Naive thymus-derived CD4-positive, alpha-beta T cell (primary cell): ENCODE measurements at regions of chr19 and their contacts with region 1.

Region 1: GRCh38 chr19:58278157-58279041 is at the start of gene ZNF8:
- DNase-seq: peak; percentile 84 to 96 (median 93)
- ATAC-seq: peak; percentile 99
- H3K4me3 ChIP-seq: peak within 1 kb of the TSS; percentile 93
- H3K4me3 Mint-ChIP-seq: peak within 1 kb of the TSS; percentile 89 to 99 (median 95)
- H3K27ac ChIP-seq: peak within 1 kb of the TSS; percentile 80
- H3K27ac Mint-ChIP-seq: peak within 1 kb of the TSS; percentile 88 to 97 (median 96)
- H3K4me1 ChIP-seq: peaks cover 12 to 15% of the 10 kb centered on the region in 2 donors
- H3K4me1 Mint-ChIP-seq: peaks cover 28 to 63% (median 43%) of the 10 kb centered on the region in 7 donors
- H3K27me3 ChIP-seq: no peaks in the 10 kb centered on the region
- H3K27me3 Mint-ChIP-seq: no peaks in the 10 kb centered on the region
- total RNA-seq, gene ZNF8: 5.2 to 10.5 (median 10.0) TPM

Region 2: GRCh38 chr19:57746580-57747471 is 531.6 kb before region 1 on chr19 and contains the start of gene ZNF776:
- CTCF ChIA-PET with region 1: no interaction called
- POLR2A ChIA-PET with region 1: no interaction called
- intact Hi-C with region 1: loop called in 1 of 2 experiments (anchors 2 kb)
- DNase-seq: peak; percentile 40 to 90 (median 84)
- ATAC-seq: peak; percentile 99
- H3K4me3 ChIP-seq: peak within 1 kb of the TSS; percentile 86
- H3K4me3 Mint-ChIP-seq: peak within 1 kb of the TSS; percentile 91 to 99 (median 94)
- H3K27ac ChIP-seq: peak within 1 kb of the TSS; percentile 85
- H3K27ac Mint-ChIP-seq: peak within 1 kb of the TSS; percentile 81 to 99 (median 94)
- H3K4me1 ChIP-seq: peaks cover 6 to 16% of the 10 kb centered on the region in 2 donors
- H3K4me1 Mint-ChIP-seq: peaks cover 13 to 40% (median 26%) of the 10 kb centered on the region in 7 donors
- H3K27me3 ChIP-seq: no peaks in the 10 kb centered on the region
- H3K27me3 Mint-ChIP-seq: no peaks in the 10 kb centered on the region
- total RNA-seq, gene ZNF776: 18.9 to 52.3 (median 21.8) TPM

Region 3: DNA sequence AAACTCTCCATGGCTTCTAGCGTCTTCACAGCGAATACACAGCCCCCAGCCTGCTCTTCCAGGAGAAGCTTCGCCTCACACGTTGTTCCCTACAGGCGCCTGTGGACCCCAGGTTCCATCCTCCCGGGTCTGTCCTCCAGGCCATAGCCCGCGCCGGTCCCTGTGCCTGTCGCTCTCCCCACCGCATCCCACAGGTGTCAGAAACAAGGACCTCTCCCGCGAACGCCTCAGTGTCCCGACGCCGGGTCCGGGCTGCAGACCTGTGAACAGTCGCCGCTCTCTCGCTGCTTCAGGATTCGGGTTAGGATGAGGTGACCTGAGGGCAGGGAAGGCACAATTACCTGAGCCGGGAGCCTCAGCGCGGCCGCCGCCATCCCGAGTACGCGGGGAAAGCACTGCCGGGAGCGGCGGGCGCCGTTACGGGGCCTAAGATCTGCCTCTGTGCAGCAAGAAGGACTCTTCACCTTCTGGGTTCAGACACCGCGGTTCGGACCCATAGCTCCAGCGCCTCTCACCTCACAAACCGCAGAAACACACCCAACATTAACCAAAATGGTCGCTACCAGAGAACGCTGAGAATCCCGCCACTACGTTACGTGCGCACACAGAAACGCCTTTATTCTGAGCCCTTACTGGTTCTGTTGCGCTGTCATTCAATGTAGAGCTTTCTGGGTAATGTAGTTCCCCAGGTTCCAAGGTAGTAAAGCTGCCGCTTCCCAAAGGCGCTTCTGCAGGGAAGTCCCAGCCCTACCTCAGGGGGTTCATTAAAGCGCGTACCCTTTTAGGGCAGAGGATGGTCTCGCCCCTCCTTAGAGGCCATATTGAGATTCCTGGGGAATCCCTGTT is 343.4 kb before region 1 on chr19 and contains the start of gene ZNF418:
- CTCF ChIA-PET with region 1: no interaction called
- POLR2A ChIA-PET with region 1: no interaction called
- intact Hi-C with region 1: no loop called
- DNase-seq: peak in 7 of 9 donors; percentile 7 to 49 (median 42)
- ATAC-seq: peak; percentile 99
- H3K4me3 ChIP-seq: peak within 1 kb of the TSS; percentile 31
- H3K4me3 Mint-ChIP-seq: peak within 1 kb of the TSS; percentile 63 to 88 (median 85)
- H3K27ac ChIP-seq: peak within 1 kb of the TSS; percentile 69
- H3K27ac Mint-ChIP-seq: peak within 1 kb of the TSS in 8 of 9 donors; percentile 51 to 93 (median 85)
- H3K4me1 ChIP-seq: no peaks in the 10 kb centered on the region
- H3K4me1 Mint-ChIP-seq: peaks cover 0 to 9% (median 6%) of the 10 kb centered on the region in 7 donors
- H3K27me3 ChIP-seq: no peaks in the 10 kb centered on the region
- H3K27me3 Mint-ChIP-seq: peaks cover 0 to 17% (median 0%) of the 10 kb centered on the region in 5 donors
- total RNA-seq, gene ZNF418: 2.1 to 7.7 (median 6.0) TPM

Region 4: GRCh38 chr19:58228585-58229254 is 49.7 kb before region 1 on chr19 and contains the start of gene ZNF544:
- CTCF ChIA-PET with region 1: no interaction called
- POLR2A ChIA-PET with region 1: interaction called, 3 read pairs
- intact Hi-C with region 1: loop called (anchors 1 to 5 kb)
- DNase-seq: peak; percentile 25 to 74 (median 39)
- ATAC-seq: peak; percentile 79
- H3K4me3 ChIP-seq: peak within 1 kb of the TSS; percentile 86
- H3K4me3 Mint-ChIP-seq: peak within 1 kb of the TSS; percentile 89 to 95 (median 94)
- H3K27ac ChIP-seq: peak within 1 kb of the TSS; percentile 73
- H3K27ac Mint-ChIP-seq: peak within 1 kb of the TSS in 8 of 9 donors; percentile 76 to 94 (median 84)
- H3K4me1 ChIP-seq: peaks cover 10% of the 10 kb centered on the region in 2 donors
- H3K4me1 Mint-ChIP-seq: peaks cover 19 to 36% (median 28%) of the 10 kb centered on the region in 7 donors
- H3K27me3 ChIP-seq: no peaks in the 10 kb centered on the region
- H3K27me3 Mint-ChIP-seq: no peaks in the 10 kb centered on the region
- total RNA-seq, gene ZNF544: 19.7 to 60.7 (median 42.1) TPM

Region 5: GRCh38 chr19:58252102-58252685 is 26.2 kb before region 1 on chr19:
- CTCF ChIA-PET with region 1: no interaction called
- POLR2A ChIA-PET with region 1: no interaction called
- intact Hi-C with region 1: no loop called
- DNase-seq: no peak
- ATAC-seq: no peak
- H3K4me3 ChIP-seq: no peak overlapping the region
- H3K4me3 Mint-ChIP-seq: no peak overlapping the region
- H3K27ac ChIP-seq: no peak overlapping the region
- H3K27ac Mint-ChIP-seq: no peak overlapping the region
- H3K4me1 ChIP-seq: no peaks in the 10 kb centered on the region
- H3K4me1 Mint-ChIP-seq: no peaks in the 10 kb centered on the region
- H3K27me3 ChIP-seq: no peaks in the 10 kb centered on the region
- H3K27me3 Mint-ChIP-seq: no peaks in the 10 kb centered on the region

Region 6: GRCh38 chr19:58362272-58362994 is 84.0 kb after region 1 on chr19 and contains the start of gene ZNF497:
- CTCF ChIA-PET with region 1: interaction called, 4 read pairs
- POLR2A ChIA-PET with region 1: interaction called, 4 read pairs
- intact Hi-C with region 1: loop called (anchors 1 kb)
- DNase-seq: peak; percentile 91 to 96 (median 95)
- ATAC-seq: peak; percentile 92
- H3K4me3 ChIP-seq: peak within 1 kb of the TSS; percentile 99
- H3K4me3 Mint-ChIP-seq: peak within 1 kb of the TSS; percentile 89 to 99 (median 95)
- H3K27ac ChIP-seq: peak within 1 kb of the TSS; percentile 78
- H3K27ac Mint-ChIP-seq: peak within 1 kb of the TSS; percentile 71 to 96 (median 90)
- H3K4me1 ChIP-seq: peaks cover 5 to 7% of the 10 kb centered on the region in 2 donors
- H3K4me1 Mint-ChIP-seq: peaks cover 7 to 21% (median 11%) of the 10 kb centered on the region in 7 donors
- H3K27me3 ChIP-seq: no peaks in the 10 kb centered on the region
- H3K27me3 Mint-ChIP-seq: peaks cover 0 to 5% (median 0%) of the 10 kb centered on the region in 5 donors
- total RNA-seq, gene ZNF497: 1.0 to 2.7 (median 1.8) TPM

Region 7: DNA sequence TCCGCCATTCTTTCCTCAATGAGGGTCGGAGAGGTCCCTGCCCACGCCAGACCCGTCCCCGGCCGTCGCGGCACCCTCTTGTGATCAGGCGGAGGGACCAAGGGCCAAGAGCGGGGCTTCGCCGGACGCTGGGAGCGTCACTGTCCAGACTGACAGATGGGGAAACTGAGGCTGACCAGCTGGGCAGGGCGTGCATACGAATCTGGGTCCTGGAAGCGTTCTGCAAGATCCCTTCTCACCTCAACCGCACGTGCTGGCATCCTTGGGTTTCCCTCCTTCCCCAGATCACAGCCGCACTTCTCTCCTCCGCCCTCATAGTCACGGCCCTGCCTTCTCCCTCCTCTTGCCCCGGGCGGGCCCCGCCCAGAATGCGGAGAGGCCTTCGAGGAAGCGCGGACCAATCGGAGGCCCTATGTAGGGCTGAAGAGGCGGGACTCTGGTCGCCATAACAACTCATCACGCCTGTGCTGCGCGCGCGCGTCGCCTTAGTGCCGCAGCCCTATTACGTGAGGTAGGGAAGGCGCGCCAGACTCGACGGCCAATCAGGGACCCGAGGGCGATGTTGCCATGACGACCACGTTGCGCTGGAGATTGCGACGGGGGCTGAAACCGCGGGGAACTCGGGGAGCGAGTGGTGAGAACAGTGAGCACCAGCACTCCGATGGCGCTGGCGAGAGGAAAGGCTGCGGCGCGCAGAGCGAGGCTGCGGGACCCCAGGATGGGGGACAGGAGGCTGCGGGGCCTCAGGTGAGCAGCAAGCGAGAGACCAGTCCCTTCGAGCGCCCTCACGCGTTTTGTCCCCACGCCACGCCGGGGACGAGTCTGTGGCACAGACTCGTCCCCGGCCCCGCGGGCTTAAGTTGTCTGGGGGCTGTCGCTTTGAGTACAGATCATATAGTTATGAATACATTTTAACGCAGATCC is 122.8 kb after region 1 on chr19:
- CTCF ChIA-PET with region 1: no interaction called
- POLR2A ChIA-PET with region 1: no interaction called
- intact Hi-C with region 1: loop called in 1 of 2 experiments (anchors 1 kb)
- DNase-seq: peak; percentile 96 to 100 (median 98)
- ATAC-seq: peak; percentile 97
- H3K4me3 ChIP-seq: peak overlapping the region; percentile 77
- H3K4me3 Mint-ChIP-seq: peak overlapping the region; percentile 86 to 98 (median 94)
- H3K27ac ChIP-seq: peak overlapping the region; percentile 91
- H3K27ac Mint-ChIP-seq: peak overlapping the region; percentile 88 to 97 (median 94)
- H3K4me1 ChIP-seq: peaks cover 6 to 13% of the 10 kb centered on the region in 2 donors
- H3K4me1 Mint-ChIP-seq: peaks cover 6 to 19% (median 8%) of the 10 kb centered on the region in 7 donors
- H3K27me3 ChIP-seq: peaks cover 0 to 3% of the 10 kb centered on the region in 2 donors
- H3K27me3 Mint-ChIP-seq: peaks cover 5 to 20% (median 7%) of the 10 kb centered on the region in 5 donors

Region 8: DNA sequence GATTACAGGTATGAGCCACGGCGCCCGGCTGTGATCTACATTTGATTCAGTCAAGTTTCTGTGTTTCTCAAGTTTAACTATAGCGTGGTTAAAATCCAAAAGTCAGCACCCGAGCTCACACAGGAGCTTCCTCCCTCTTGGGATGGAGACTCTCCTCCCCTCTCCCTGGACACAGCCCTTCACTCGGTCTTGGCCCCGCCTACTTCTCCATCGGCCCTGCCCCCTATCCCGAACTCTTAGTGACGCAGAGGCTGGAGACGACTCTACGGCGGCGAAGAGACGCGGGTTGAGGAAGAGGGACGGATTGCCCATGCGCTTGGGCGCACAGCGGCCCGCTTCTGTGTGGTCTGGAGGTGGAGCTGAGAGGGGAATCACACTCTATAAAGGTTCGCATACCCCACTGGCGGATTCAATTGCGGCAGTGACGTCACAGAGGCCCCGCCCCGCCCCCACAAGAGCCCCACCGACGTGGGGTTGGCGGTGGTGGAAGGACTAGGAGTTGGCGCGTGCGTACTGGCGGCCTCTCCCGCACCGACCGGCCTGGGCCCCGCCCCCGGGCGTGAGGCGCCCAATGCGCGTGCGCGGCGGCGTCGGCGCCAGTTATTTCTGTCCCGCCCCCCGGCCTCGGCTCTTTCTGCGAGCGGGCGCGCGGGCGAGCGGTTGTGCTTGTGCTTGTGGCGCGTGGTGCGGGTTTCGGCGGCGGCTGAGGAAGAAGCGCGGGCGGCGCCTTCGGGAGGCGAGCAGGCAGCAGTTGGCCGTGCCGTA is 265.6 kb after region 1 on chr19 and contains the start of gene TRIM28:
- CTCF ChIA-PET with region 1: no interaction called
- POLR2A ChIA-PET with region 1: no interaction called
- intact Hi-C with region 1: loop called in 1 of 2 experiments (anchors 1 kb)
- DNase-seq: peak; percentile 100
- ATAC-seq: peak; percentile 92
- H3K4me3 ChIP-seq: peak within 1 kb of the TSS; percentile 97
- H3K4me3 Mint-ChIP-seq: peak within 1 kb of the TSS; percentile 94 to 99 (median 96)
- H3K27ac ChIP-seq: peak within 1 kb of the TSS; percentile 83
- H3K27ac Mint-ChIP-seq: peak within 1 kb of the TSS; percentile 96 to 100 (median 99)
- H3K4me1 ChIP-seq: peaks cover 16% of the 10 kb centered on the region in 2 donors
- H3K4me1 Mint-ChIP-seq: peaks cover 28 to 43% (median 36%) of the 10 kb centered on the region in 7 donors
- H3K27me3 ChIP-seq: no peaks in the 10 kb centered on the region
- H3K27me3 Mint-ChIP-seq: peaks cover 0 to 33% (median 0%) of the 10 kb centered on the region in 5 donors
- total RNA-seq, gene TRIM28: 396 to 564 (median 435) TPM